ENCODE measurements at regions of chr10 and their contacts with region 1.

Region 1: DNA sequence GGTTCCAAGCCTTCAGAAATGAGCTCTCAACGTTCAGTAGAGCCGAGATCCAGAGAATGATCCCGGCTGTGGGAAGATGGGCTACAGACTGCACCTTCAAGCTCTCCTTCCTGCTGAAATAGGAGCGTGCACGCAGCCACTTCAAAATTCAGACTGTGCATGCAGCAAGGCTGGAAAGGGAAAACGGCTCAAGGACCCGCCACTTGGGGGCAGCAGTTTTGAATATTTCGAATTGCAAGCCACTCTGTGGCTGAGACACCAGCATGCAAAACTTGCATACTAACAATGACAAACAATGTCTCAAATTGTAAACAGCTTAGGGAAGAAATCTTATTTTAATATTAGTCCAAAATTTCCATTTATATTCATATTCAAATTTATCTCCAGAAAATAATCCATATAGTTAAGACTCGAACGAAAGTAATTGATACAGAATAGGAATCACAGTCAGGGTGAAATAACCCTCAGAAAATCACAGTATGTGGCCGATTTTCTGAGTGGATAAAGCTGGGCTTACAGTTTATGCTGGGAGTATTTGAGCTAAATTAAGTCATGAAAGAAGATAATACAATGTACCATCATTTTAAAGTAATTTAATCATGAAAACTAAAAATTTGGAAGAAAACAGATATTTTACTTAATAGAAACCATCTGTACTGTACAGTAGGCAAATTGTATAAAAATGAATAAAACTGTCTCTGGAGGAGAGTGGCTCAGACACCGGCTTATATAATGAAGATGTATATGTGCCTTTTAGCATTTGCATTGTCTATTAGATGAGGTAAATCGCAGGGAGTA is 137.9 kb upstream of the MKI67 start:
- DNase-seq: peak; percentile 27 to 80
- H3K4me3 ChIP-seq: no peak overlapping the region
- H3K27ac ChIP-seq: no peak overlapping the region
- H3K4me1 ChIP-seq: peaks cover 0 to 5% (median 0%) of the 10 kb centered on the region in 4 experiments; a peak in 3 of 7 replicates
- H3K27me3 ChIP-seq: no peaks in the 10 kb centered on the region; a peak in 2 of 7 replicates
- CTCF ChIP-seq: peak; percentile 64 to 72 (median 66)
- EP300 ChIP-seq: no peak
- POLR2A ChIP-seq: no peak
- RAD21 ChIP-seq: peak; percentile 61 to 62

Region 2: DNA sequence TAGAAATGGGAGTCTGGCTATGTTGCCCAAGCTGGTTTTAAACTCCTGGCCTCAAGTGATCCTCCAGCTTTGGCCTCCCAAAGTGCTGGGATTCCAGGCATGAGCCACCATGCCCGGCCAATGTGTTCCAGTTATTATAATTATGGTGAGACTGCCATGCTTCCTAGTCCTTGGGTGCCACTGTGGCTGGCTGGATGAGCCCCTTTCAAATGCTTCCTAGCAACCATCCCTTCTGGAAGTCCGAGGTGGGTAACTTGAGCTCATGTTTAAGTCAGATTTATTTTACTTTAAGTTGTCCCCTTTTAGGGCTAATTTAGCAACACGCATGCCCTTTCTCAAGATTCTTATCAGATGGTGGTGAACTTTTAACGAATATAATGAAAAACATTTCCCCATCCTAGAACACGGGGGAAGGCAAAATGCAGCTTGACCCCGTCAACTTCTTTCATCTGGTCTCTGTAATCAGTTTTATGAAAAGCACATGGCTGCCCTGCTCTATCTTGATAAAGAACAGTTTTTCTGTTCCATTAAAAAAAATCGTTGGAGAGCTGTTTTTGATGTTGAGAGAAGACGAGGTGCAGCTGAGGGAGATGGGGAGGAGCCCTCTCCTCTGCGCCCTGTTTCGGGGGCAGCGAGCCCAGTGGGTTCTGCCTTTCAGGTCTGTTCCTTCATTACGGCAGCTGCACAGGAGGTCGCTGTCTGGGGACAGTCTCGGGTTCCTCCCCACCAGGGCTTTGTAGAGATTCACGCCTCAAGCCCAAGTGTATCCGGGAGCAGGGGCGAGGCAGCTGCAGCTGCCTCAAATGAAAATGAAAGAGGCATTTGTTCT is 76.9 kb before region 1 on chr10:
- CTCF ChIA-PET with region 1: no interaction called
- POLR2A ChIA-PET with region 1: no interaction called
- DNase-seq: no peak
- H3K4me3 ChIP-seq: no peak overlapping the region
- H3K27ac ChIP-seq: no peak overlapping the region
- H3K4me1 ChIP-seq: peaks cover 0 to 6% (median 3%) of the 10 kb centered on the region in 4 experiments; a peak in 4 of 7 replicates
- H3K27me3 ChIP-seq: no peaks in the 10 kb centered on the region; a peak in 1 of 7 replicates
- CTCF ChIP-seq: no peak
- EP300 ChIP-seq: no peak
- POLR2A ChIP-seq: no peak
- RAD21 ChIP-seq: no peak

Region 3: DNA sequence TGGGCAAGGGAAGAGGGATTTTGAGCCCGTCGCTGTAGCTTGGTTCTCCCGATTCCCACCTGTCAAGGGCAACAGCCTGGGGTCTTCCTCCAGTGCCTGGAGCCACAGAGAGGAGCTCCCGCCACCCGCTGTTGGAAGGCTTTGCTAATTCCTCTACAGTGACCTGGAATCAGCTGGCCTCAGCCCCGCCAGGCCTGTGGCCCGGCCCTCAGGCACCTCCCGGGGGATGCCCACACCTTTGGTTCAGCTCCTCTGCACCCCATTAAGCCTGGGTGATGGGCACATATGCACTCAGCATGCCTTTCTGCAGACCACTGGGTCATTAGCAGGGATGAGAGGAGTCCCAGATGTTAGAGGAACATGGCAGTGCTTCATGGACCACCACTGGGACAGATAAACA is 16.5 kb before region 1 on chr10:
- CTCF ChIA-PET with region 1: interaction called, 10 read pairs
- POLR2A ChIA-PET with region 1: no interaction called
- DNase-seq: no peak
- H3K4me3 ChIP-seq: no peak overlapping the region
- H3K27ac ChIP-seq: no peak overlapping the region
- H3K4me1 ChIP-seq: no peaks in the 10 kb centered on the region
- H3K27me3 ChIP-seq: no peaks in the 10 kb centered on the region
- CTCF ChIP-seq: no peak
- EP300 ChIP-seq: no peak
- POLR2A ChIP-seq: no peak
- RAD21 ChIP-seq: no peak

Region 4: GRCh38 chr10:128286762-128287500 is 22.8 kb after region 1 on chr10:
- CTCF ChIA-PET with region 1: interaction called, 18 read pairs
- POLR2A ChIA-PET with region 1: no interaction called
- DNase-seq: peak in 1 of 2 experiments; percentile 70
- H3K4me3 ChIP-seq: peak overlapping the region; percentile 14 to 62 (median 28); a peak in 6 of 8 replicates
- H3K27ac ChIP-seq: no peak overlapping the region
- H3K4me1 ChIP-seq: peaks cover 0 to 6% (median 0%) of the 10 kb centered on the region in 4 experiments; a peak in 2 of 7 replicates
- H3K27me3 ChIP-seq: peaks cover 13 to 35% (median 31%) of the 10 kb centered on the region in 4 experiments
- CTCF ChIP-seq: no peak
- EP300 ChIP-seq: no peak
- POLR2A ChIP-seq: no peak
- RAD21 ChIP-seq: no peak

Region 5: GRCh38 chr10:128419466-128420019 is 155.5 kb after region 1 on chr10:
- CTCF ChIA-PET with region 1: interaction called, 10 read pairs
- POLR2A ChIA-PET with region 1: no interaction called
- DNase-seq: no peak
- H3K4me3 ChIP-seq: no peak overlapping the region
- H3K27ac ChIP-seq: no peak overlapping the region
- H3K4me1 ChIP-seq: peaks cover 0 to 4% (median 0%) of the 10 kb centered on the region in 4 experiments; a peak in 1 of 7 replicates
- H3K27me3 ChIP-seq: no peaks in the 10 kb centered on the region
- CTCF ChIP-seq: peak; percentile 24 to 34 (median 31)
- EP300 ChIP-seq: no peak
- POLR2A ChIP-seq: no peak
- RAD21 ChIP-seq: peak; percentile 39 to 60; a peak in 3 of 4 replicates

Region 6: GRCh38 chr10:128859738-128860386 is 595.8 kb after region 1 on chr10:
- CTCF ChIA-PET with region 1: interaction called, 12 read pairs
- POLR2A ChIA-PET with region 1: no interaction called
- DNase-seq: peak in 1 of 2 experiments; percentile 67
- H3K4me3 ChIP-seq: no peak overlapping the region
- H3K27ac ChIP-seq: no peak overlapping the region
- H3K4me1 ChIP-seq: no peaks in the 10 kb centered on the region; a peak in 2 of 7 replicates
- H3K27me3 ChIP-seq: no peaks in the 10 kb centered on the region
- CTCF ChIP-seq: peak in 2 of 3 experiments; percentile 42 to 60; a peak in 2 of 4 replicates
- EP300 ChIP-seq: no peak
- POLR2A ChIP-seq: no peak
- RAD21 ChIP-seq: peak; percentile 61 to 68